ENCODE measurements at regions of chr11 and their contacts with region 1.

Region 1: DNA sequence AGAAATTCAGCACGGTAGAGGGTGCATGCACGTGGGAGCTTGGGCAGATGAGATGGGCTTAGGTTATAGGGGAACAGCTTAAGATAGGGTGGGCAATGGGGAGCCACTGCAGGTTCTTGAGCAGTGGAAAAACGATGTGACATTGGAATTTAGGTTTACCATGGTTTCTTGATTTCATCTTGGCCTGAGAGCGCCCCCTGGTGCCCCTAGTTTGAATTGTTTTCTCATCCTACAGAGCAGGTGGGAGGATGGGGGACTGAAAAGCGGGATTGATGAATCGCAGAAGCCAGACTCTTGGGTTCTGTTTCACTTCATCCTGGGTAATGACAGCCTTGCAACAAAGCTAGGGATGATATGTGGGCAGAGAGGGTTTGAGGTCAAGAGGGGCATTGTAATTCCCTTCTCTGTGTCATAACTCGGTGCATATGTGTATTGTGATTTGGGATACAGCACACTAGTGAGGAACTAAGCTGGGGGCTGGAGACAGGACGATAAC is 6.7 kb upstream of the MCAM start:
- DNase-seq: peak in 1 of 2 experiments; percentile 98
- H3K4me3 ChIP-seq: no peak overlapping the region
- H3K27ac ChIP-seq: no peak overlapping the region
- H3K4me1 ChIP-seq: peaks cover 10 to 25% (median 20%) of the 10 kb centered on the region in 4 experiments
- H3K27me3 ChIP-seq: peaks cover 0 to 3% (median 1%) of the 10 kb centered on the region in 4 experiments; a peak in 2 of 7 replicates
- CTCF ChIP-seq: peak in 2 of 3 experiments; percentile 83 to 89; a peak in 3 of 4 replicates
- EP300 ChIP-seq: peak in 1 of 2 experiments; percentile 20; a peak in 1 of 3 replicates
- POLR2A ChIP-seq: no peak
- RAD21 ChIP-seq: peak; percentile 78 to 82

Region 2: DNA sequence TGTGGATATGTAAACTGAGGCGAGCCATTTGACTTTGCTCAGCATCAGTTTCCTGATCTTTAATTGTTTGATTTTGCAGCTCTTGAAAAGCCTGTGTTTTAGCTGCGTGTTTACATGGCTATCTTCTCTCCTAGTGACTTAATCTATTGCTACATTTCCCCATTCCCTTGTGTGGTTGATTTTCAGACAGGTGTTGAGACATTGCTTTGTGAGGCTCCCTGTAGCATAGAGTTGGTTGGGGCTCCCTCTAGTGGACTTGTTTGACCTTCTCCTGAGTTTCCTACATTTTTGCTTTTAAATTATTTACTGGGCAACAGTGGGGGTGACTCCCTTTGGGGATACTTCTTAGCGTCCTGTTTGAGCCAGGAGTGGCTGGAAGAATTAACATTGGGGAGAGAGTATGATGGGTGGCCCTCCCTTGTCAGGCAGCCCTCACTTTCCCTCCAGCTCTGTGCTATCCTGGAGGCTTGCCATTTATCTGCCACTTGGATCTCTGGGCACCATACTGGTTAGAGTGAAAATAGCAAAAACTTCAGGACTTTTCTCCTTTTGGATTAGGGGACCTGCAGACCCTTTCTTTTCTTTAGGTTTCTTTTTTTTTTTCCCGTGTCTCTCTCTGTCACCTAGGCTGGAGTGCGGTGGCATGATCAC is 126.6 kb before region 1 on chr11:
- CTCF ChIA-PET with region 1: interaction called, 24 read pairs
- POLR2A ChIA-PET with region 1: no interaction called
- DNase-seq: peak in 1 of 2 experiments; percentile 74
- H3K4me3 ChIP-seq: no peak overlapping the region
- H3K27ac ChIP-seq: no peak overlapping the region
- H3K4me1 ChIP-seq: peaks cover 0 to 7% (median under 1%) of the 10 kb centered on the region in 4 experiments; a peak in 4 of 7 replicates
- H3K27me3 ChIP-seq: no peaks in the 10 kb centered on the region
- CTCF ChIP-seq: peak in 2 of 3 experiments; percentile 87; a peak in 3 of 4 replicates
- EP300 ChIP-seq: no peak
- POLR2A ChIP-seq: no peak
- RAD21 ChIP-seq: peak; percentile 85 to 88

Region 3: DNA sequence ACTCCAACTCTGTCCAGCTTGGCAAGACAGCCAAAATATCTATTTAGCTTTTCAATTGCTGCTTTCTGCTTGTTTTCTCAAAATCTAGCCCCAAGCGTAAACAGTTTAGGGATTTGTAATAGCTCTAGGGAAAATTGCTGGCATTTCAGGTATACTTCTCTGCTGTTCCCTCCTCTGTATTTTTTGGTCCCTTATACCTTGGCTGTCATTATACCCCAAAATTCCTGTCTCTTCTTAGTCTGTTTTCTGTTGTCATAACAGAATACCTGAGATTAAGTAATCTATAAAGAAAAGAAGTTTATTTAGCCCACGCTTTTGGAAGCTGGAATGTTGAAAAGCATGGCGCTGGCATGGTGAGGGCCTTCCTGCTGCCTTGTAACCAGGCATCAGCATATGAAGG is 30.1 kb before region 1 on chr11:
- CTCF ChIA-PET with region 1: interaction called, 16 read pairs
- POLR2A ChIA-PET with region 1: no interaction called
- DNase-seq: no peak
- H3K4me3 ChIP-seq: no peak overlapping the region
- H3K27ac ChIP-seq: no peak overlapping the region
- H3K4me1 ChIP-seq: no peaks in the 10 kb centered on the region
- H3K27me3 ChIP-seq: no peaks in the 10 kb centered on the region
- CTCF ChIP-seq: no peak
- EP300 ChIP-seq: no peak
- POLR2A ChIP-seq: no peak
- RAD21 ChIP-seq: no peak

Region 4: DNA sequence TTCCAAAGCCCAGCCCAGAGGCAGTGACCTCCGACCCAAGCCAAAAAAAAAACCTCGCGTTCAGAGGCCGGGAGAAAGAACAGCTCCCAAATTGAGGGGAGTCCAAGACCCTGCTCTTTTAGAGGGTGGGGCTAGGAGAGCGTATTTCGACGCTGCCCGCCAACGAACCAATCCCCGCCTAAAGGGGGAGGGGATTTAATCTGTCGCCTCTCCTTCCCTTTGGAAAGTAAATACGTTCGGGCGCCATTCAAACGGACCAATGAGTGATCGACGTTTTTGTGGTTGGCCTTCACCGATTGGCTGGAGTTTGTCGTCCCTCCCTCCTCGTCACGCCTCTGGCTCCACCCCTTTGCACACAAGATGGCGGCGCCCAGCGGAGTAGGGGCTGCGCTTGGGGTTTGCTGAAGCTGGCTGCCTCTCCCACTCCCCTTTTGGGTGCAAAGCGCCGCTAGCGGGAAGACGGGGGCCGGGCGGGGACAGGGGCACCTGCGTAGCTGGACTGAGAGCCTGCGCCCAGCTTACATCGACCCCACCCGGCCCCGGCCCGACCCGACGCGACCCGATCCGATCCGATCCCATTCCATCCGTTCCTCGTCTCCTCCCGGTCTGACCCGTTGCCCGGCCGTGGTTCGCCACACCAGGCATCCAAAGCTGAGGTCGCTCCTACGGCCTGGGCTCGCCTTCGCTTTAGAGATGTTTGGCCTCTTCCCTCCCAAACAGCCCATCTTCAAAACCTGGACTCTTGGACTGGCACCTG is 10.8 kb after region 1 on chr11 and contains the start of gene RNF26:
- CTCF ChIA-PET with region 1: interaction called, 415 read pairs
- POLR2A ChIA-PET with region 1: interaction called, 29 read pairs
- DNase-seq: peak; percentile 95 to 98
- H3K4me3 ChIP-seq: peak within 1 kb of the TSS; percentile 92 to 96 (median 96)
- H3K27ac ChIP-seq: peak within 1 kb of the TSS; percentile 89
- H3K4me1 ChIP-seq: peaks cover 4 to 24% (median 18%) of the 10 kb centered on the region in 4 experiments
- H3K27me3 ChIP-seq: peaks cover 3 to 8% (median 6%) of the 10 kb centered on the region in 4 experiments; a peak in 6 of 7 replicates
- CTCF ChIP-seq: no peak
- EP300 ChIP-seq: no peak
- POLR2A ChIP-seq: peak in 1 of 2 experiments; percentile 88; a peak in 2 of 3 replicates
- RAD21 ChIP-seq: no peak
- total RNA-seq, gene RNF26: 82.7 and 86.6 TPM in 2 replicates

Region 5: GRCh38 chr11:119373921-119374631 is 50.5 kb after region 1 on chr11:
- CTCF ChIA-PET with region 1: interaction called, 55 read pairs
- POLR2A ChIA-PET with region 1: no interaction called
- DNase-seq: peak in 1 of 2 experiments; percentile 97
- H3K4me3 ChIP-seq: no peak overlapping the region
- H3K27ac ChIP-seq: no peak overlapping the region
- H3K4me1 ChIP-seq: peaks cover 8 to 51% (median 36%) of the 10 kb centered on the region in 4 experiments
- H3K27me3 ChIP-seq: peaks cover 0 to 3% (median 0%) of the 10 kb centered on the region in 4 experiments; a peak in 1 of 7 replicates
- CTCF ChIP-seq: peak; percentile 82 to 92 (median 89)
- EP300 ChIP-seq: no peak
- POLR2A ChIP-seq: no peak
- RAD21 ChIP-seq: peak; percentile 92 to 95

Region 6: DNA sequence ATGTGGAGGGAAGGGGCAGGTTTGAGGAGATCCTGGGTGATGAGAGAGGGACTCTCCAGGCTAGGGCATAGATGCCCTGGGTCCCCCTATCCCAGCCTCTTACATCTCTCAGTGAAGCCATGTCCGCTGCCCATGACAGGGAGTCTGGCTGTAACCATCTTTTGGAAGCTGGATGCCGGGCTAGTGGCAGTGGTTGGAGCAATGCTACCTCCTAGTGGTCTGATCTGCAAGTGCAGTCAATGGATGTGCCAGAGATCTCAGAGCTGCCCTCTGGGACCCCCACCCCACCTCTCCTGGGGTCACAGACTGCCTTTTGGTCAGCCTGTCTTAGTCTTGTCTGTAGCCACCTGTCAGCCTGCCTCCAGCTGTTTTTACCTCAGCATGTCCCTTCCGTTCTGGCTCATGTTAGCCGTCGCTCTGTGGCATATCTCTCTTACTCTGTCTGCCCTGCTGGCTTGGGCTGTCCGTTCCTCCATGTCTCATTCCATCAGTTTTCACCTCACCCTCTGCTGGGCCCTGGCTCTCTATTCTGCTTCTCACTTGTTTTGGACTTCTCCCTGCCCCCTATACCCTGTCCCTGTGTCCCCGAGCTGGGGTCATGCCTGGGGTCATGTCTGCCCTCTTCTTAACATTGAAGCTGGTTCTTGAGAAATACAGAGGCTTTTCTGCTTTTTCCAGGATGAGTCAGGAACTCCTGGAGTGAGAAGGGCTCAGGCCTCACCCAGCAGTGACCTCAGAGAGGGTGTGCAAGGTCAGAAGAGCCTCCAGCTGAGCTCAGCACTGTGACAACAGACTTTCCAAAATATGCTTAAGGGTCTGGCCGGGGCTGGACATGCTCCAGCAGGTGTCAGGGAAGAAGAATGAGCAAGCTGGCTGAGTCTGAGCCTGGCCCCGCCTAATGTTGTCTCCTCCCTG is 151.4 kb after region 1 on chr11:
- CTCF ChIA-PET with region 1: interaction called, 19 read pairs
- POLR2A ChIA-PET with region 1: no interaction called
- DNase-seq: peak in 1 of 2 experiments; percentile 91
- H3K4me3 ChIP-seq: no peak overlapping the region
- H3K27ac ChIP-seq: no peak overlapping the region
- H3K4me1 ChIP-seq: peaks cover 0 to 13% (median under 1%) of the 10 kb centered on the region in 4 experiments; a peak in 5 of 7 replicates
- H3K27me3 ChIP-seq: no peaks in the 10 kb centered on the region; a peak in 2 of 7 replicates
- CTCF ChIP-seq: peak; percentile 83 to 95 (median 95)
- EP300 ChIP-seq: no peak
- POLR2A ChIP-seq: no peak
- RAD21 ChIP-seq: peak; percentile 98 to 99

Region 7: GRCh38 chr11:119752345-119752871 is 428.8 kb after region 1 on chr11:
- CTCF ChIA-PET with region 1: no interaction called
- POLR2A ChIA-PET with region 1: no interaction called
- DNase-seq: no peak
- H3K4me3 ChIP-seq: no peak overlapping the region
- H3K27ac ChIP-seq: no peak overlapping the region
- H3K4me1 ChIP-seq: peaks cover 0 to 1% (median 0%) of the 10 kb centered on the region in 4 experiments; a peak in 2 of 7 replicates
- H3K27me3 ChIP-seq: 0 out of 7 replicates have a peak, but pooled peaks cover 0 to 5% (median 0%) of the 10 kb centered on the region in 4 experiments
- CTCF ChIP-seq: no peak
- EP300 ChIP-seq: no peak
- POLR2A ChIP-seq: no peak
- RAD21 ChIP-seq: no peak

Measured in H1 (cell line).